ENCODE measurements at regions of chr12 and their contacts with region 1.

Region 1: DNA sequence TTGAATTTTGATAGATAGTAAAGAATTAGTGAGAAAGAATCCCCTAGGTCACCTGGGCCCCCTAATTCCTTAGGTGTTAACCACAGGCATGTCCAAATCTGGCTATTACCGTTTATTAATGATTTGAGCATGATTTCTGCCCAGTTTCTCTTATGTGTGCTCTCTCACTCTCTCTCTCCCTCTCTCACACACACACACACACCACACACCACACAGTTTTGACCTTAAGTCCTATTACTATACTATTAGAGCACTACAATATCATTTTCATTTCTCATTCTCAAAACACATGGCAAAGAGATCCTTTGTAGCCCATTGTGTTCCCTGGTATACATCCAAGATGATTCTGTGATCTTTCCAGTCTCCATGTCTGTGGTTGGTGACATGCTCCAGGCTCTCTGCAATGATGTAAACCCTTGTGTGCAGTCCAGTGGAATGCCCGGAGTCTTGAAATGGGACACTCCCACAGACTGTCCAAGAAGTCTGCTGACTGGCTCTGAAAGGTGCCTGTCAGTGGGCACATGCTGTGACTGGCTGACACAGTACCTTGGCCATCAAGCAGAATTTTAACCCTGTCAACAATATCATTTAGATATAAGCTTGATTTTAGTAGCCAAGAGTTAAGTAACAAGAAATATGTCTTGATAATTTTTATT is 96.2 kb downstream of the FIGNL2 start:
- DNase-seq: peak; percentile 93
- H3K4me3 ChIP-seq: no peak overlapping the region
- H3K27ac ChIP-seq: no peak overlapping the region
- H3K4me1 ChIP-seq: peaks cover 27% of the 10 kb centered on the region
- H3K27me3 ChIP-seq: no peaks in the 10 kb centered on the region
- CTCF ChIP-seq: no peak
- POLR2A ChIP-seq: no peak

Region 2: DNA sequence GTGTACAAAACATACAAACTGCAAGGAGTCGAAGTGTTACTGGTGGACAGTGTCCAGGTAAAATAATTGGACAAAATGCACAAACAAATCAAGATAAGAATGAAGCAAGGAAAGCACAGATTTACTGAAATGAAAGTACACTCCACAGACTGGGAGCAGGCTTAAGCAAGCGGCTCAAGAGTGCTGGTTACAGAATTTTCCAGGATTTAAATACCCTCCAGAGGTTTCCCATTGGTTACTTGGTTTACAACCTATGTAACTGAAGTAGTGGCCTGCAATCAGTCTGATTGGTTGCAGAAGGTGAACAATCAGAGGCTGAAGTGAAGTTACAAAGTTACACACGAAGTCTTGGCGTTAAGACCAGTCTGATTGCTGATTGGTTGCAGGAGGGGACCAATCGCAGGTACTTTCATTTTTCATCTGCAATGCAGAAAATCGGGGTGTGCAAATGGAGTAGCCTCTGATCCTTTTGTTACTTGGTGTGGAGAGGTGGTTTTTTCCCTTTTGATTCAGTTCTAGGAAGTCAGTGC is 173.0 kb before region 1 on chr12:
- CTCF ChIA-PET with region 1: no interaction called
- POLR2A ChIA-PET with region 1: no interaction called
- dilution Hi-C with region 1: no loop called
- intact Hi-C with region 1: no loop called
- DNase-seq: no peak
- H3K4me3 ChIP-seq: no peak overlapping the region
- H3K27ac ChIP-seq: no peak overlapping the region
- H3K4me1 ChIP-seq: no peaks in the 10 kb centered on the region
- H3K27me3 ChIP-seq: peaks cover 4 to 8% of the 10 kb centered on the region in 2 experiments
- CTCF ChIP-seq: no peak
- POLR2A ChIP-seq: no peak

Region 3: DNA sequence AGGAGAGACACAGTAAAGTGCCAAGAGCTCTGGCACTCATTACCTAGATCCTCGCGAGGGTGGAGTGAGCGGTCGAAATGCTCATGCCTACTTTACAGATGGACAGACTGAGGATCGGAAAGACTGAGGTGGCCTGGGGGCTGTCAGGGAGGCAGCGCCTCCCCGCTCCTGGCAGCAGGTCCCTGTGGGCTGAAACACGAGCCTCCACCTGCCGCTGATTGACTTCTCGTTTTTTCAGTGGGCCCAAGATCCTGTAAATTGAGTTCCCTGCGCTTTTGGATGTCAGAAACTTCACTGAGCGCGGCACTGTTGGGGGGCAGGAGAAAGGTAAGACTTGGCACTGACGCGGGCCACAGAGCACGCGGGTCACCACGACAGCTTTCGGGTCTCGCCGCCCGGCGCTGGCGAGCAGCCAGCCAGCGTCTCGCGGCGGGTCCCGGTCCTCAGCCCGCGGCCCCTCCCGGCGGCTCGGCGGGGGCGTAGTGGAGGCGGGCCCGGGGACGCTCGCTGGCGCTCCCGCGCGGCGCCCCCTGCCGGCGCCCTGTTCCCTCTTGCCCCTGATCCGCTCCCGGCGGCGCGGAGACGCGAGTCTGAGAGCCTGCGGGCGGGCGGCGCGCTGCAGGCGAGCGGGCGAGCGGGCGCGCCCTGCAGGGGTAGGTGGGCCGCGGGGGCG is 161.9 kb before region 1 on chr12:
- CTCF ChIA-PET with region 1: no interaction called
- POLR2A ChIA-PET with region 1: no interaction called
- dilution Hi-C with region 1: no loop called
- intact Hi-C with region 1: loop called (anchors 5 kb)
- DNase-seq: peak; percentile 64
- H3K4me3 ChIP-seq: peak overlapping the region; percentile 34 to 85 (median 58)
- H3K27ac ChIP-seq: no peak overlapping the region
- H3K4me1 ChIP-seq: peaks cover 6% of the 10 kb centered on the region
- H3K27me3 ChIP-seq: peaks cover 17 to 20% of the 10 kb centered on the region in 2 experiments
- CTCF ChIP-seq: peak; percentile 61 to 69
- POLR2A ChIP-seq: no peak

Region 4: GRCh38 chr12:51814311-51815088 is 62.1 kb after region 1 on chr12:
- CTCF ChIA-PET with region 1: no interaction called
- POLR2A ChIA-PET with region 1: no interaction called
- dilution Hi-C with region 1: no loop called
- intact Hi-C with region 1: no loop called
- DNase-seq: peak; percentile 72
- H3K4me3 ChIP-seq: peak overlapping the region; percentile 40 to 46 (median 46)
- H3K27ac ChIP-seq: peak overlapping the region; percentile 74
- H3K4me1 ChIP-seq: peaks cover 9% of the 10 kb centered on the region
- H3K27me3 ChIP-seq: no peaks in the 10 kb centered on the region
- CTCF ChIP-seq: peak; percentile 73 to 80
- POLR2A ChIP-seq: peak; percentile 55

Measured in endothelial cell of umbilical vein (primary cell).